Activated CD8-positive, alpha-beta T cell treated with anti-CD3 and anti-CD28 coated beads, Interleukin-2, amount 10 ng/mL, durations not matched to agents 7 days and 5 days (primary cell): ENCODE measurements at regions of chr1 and their contacts with region 1.

Region 1: DNA sequence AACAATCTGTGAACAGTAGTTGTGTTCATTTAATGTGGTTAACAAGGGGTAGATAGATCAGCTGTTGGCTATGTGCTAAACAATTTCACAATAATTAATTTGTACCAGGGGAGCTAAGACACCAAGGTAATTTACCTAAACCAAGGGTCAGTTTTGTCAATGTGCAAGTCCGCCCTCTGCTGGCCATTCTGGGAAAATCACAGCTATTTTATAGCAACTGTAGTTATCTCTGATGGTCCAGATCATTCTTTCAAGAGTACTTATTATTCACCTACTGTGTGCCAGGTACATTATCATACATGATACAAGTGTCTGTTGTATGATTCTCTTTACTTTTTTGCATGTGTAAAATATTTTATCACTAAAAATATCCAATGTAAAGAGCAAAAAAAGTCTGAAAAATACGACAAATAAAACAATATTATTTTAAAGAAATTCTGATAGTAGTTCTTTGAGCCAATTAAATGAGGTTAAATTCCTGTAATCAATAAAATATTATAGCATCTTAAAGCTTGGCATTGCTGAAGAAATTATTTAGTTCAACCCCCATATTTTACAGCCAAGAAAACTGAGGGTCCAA is 312.3 kb upstream of the FAM78B start:
- DNase-seq: peak; percentile 70
- ATAC-seq: no peak
- H3K4me3 Mint-ChIP-seq: no peak overlapping the region
- H3K27ac Mint-ChIP-seq: no peak overlapping the region
- H3K4me1 Mint-ChIP-seq: no peaks in the 10 kb centered on the region
- H3K27me3 Mint-ChIP-seq: no peaks in the 10 kb centered on the region

Region 2: DNA sequence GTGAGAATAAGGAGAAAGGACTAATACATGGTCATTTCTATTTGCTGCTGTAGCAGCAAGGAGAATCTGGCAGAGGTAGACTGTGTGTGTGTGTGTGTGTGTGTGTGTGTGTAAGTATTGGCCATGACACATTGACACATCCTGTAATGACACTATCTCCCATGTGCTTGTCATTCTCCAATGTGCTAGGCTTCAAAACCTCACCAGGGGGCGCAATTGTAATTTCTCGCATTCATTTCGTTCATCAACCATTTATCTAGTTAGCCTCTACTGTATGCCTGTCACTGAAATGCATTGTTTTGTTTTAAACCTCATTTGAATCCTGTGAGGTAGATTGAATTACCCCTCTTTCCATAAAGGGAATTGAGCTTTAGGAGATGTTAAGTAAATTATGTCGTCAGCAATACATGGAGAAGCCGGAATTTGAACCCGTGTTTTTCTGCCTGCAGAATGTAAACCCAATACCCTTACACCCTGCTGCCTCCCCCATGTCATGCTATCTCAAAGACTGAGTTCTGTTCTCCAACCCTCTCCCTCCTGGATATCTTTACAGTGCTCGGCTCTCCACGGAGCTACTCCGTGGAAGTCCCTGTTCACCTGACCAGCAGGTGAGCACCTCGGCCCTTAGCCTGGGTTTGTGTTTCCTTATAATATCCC is 550.9 kb before region 1 on chr1:
- CTCF ChIA-PET with region 1: interaction called, 54 read pairs
- POLR2A ChIA-PET with region 1: no interaction called
- DNase-seq: peak; percentile 70
- ATAC-seq: peak; percentile 63
- H3K4me3 Mint-ChIP-seq: no peak overlapping the region
- H3K27ac Mint-ChIP-seq: no peak overlapping the region
- H3K4me1 Mint-ChIP-seq: no peaks in the 10 kb centered on the region
- H3K27me3 Mint-ChIP-seq: peaks cover 4% of the 10 kb centered on the region

Region 3: GRCh38 chr1:166202546-166202945 is 276.6 kb before region 1 on chr1:
- CTCF ChIA-PET with region 1: no interaction called
- POLR2A ChIA-PET with region 1: no interaction called
- DNase-seq: no peak
- ATAC-seq: no peak
- H3K4me3 Mint-ChIP-seq: no peak overlapping the region
- H3K27ac Mint-ChIP-seq: no peak overlapping the region
- H3K4me1 Mint-ChIP-seq: no peaks in the 10 kb centered on the region
- H3K27me3 Mint-ChIP-seq: no peaks in the 10 kb centered on the region

Region 4: GRCh38 chr1:166350490-166350889 is 128.7 kb before region 1 on chr1:
- CTCF ChIA-PET with region 1: no interaction called
- POLR2A ChIA-PET with region 1: no interaction called
- DNase-seq: no peak
- ATAC-seq: no peak
- H3K4me3 Mint-ChIP-seq: no peak overlapping the region
- H3K27ac Mint-ChIP-seq: no peak overlapping the region
- H3K4me1 Mint-ChIP-seq: no peaks in the 10 kb centered on the region
- H3K27me3 Mint-ChIP-seq: no peaks in the 10 kb centered on the region

Region 5: DNA sequence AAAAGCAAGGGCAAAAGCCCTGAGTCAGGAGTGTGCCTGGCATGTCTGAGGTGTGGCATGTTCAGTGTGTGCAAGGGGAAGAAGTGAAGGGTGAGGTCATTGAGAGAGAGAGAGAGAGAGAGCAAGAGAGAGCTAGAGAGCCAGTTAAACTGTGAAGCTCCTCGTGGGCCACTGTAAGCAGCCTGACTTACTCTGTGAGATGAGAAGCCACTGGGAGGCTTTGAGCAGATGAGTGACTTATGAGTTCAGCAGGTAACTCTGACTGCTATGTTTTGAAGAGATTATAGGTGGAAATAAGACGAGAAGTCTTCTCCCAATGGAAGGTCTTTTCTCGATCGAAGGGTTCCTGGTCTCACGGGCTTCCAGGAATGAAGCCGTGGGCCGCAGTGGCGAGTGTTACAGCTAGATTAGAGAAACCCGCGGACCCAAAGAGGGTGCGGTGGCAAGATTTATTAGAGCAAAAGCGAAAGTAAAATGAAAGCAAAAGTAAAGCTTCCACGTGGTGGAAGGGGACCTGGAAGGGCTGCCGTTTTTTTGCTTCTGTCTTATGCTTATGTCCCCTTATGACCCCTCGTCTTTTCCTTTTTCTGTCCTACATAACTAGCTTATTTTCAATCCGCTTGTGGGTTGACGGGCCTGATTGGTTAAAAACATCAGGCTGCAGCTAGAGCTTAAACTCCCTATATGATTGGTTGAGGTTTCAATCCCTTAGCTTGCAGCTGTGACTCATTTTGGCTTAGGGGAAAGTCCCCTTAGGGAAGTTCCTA is 10.7 kb after region 1 on chr1:
- CTCF ChIA-PET with region 1: interaction called, 40 read pairs
- POLR2A ChIA-PET with region 1: no interaction called
- DNase-seq: peak; percentile 64
- ATAC-seq: peak; percentile 88
- H3K4me3 Mint-ChIP-seq: no peak overlapping the region
- H3K27ac Mint-ChIP-seq: no peak overlapping the region
- H3K4me1 Mint-ChIP-seq: peaks cover 16% of the 10 kb centered on the region
- H3K27me3 Mint-ChIP-seq: peaks cover 4% of the 10 kb centered on the region

Region 6: DNA sequence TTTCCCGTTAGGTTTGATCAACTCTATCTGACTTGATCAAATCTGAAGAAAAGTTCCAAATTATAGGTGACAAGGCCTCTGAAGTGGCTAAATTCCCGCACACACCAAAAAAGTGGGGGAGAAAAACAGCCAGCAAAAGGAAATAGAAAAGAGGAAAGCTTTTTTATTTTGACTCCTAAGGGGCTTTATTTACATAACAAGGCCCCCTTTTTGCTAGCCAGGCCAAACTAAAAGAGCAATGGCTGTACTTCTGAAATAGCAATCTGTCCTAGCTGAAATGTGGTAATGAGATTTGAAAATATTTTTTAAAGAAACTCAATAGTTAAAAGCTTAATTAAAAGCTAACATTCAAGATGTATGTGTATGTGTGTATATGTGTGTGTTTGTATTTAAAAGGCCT is 48.6 kb after region 1 on chr1:
- CTCF ChIA-PET with region 1: no interaction called
- POLR2A ChIA-PET with region 1: no interaction called
- DNase-seq: no peak
- ATAC-seq: no peak
- H3K4me3 Mint-ChIP-seq: no peak overlapping the region
- H3K27ac Mint-ChIP-seq: no peak overlapping the region
- H3K4me1 Mint-ChIP-seq: no peaks in the 10 kb centered on the region
- H3K27me3 Mint-ChIP-seq: peaks cover 3% of the 10 kb centered on the region